Activated CD4-positive, alpha-beta T cell treated with anti-CD3 and anti-CD28 coated beads, Interleukin-2, amount 10 ng/mL, durations not matched to agents 24 days and 14 days (primary cell): ENCODE measurements at regions of chr18 and their contacts with region 1.

Region 1: DNA sequence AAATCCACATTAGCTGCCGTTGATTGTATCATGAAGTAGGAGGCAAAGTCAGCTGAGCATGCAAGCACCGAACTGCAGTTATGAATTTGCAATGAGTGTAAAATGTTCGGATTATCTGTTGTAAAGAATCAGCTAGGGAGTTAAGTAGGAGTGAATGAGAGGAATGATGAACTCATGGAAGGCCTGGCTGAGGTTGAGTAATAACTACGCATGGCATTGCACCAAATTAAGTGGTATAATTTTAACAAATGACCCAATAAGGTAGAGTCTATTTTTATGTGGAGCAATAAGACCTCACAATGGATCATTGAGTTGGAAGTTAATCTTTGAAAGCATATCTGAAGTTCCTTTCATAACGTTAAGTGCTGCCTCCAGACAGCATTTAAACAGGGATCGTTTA is 288.2 kb upstream of the CHST9 start:
- DNase-seq: no peak
- H3K4me3 Mint-ChIP-seq: no peak overlapping the region
- H3K27ac Mint-ChIP-seq: no peak overlapping the region
- H3K4me1 Mint-ChIP-seq: no peaks in the 10 kb centered on the region
- H3K27me3 Mint-ChIP-seq: no peaks in the 10 kb centered on the region

Region 2: DNA sequence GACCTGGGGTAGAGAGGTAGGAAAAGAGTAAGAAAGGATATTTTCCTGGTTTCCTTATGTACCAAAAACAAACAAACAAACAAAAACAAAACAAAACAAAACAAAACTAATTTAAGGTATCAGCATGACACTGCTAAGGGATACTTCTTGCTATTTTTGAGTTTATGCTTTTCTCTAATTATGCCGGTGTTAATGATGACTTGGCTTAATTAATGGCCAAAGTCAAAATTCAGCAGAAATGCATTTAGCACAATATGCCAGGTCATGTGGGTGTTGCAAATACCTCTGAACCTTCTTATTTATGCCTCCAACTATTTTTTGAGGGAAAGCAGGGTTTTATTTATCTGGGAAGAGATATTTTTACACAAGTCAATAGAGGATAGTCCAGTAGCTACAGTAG is 285.0 kb before region 1 on chr18:
- intact Hi-C with region 1: no loop called
- DNase-seq: no peak
- H3K4me3 Mint-ChIP-seq: no peak overlapping the region
- H3K27ac Mint-ChIP-seq: no peak overlapping the region
- H3K4me1 Mint-ChIP-seq: no peaks in the 10 kb centered on the region
- H3K27me3 Mint-ChIP-seq: peaks cover 17% of the 10 kb centered on the region

Region 3: DNA sequence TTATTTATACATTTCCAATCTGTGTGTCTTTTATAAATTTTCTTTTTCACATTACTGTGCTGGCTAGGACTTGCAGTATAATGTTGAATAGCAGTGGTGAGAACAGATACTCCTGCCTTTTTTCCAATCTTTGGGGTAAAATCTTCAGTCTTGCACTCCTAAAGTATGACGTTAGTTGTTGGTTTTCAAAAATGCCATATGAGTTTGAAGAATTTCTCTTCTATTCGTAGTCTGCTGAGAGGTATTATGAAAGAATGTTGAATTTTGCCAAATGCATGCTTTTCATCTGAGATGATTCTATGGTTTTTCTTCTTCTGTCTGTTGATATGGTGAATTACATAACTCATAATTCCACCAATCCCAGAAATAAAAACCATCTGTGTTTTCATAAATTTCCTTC is 47.1 kb after region 1 on chr18:
- intact Hi-C with region 1: loop called (anchors 10 kb)
- DNase-seq: no peak
- H3K4me3 Mint-ChIP-seq: no peak overlapping the region
- H3K27ac Mint-ChIP-seq: no peak overlapping the region
- H3K4me1 Mint-ChIP-seq: no peaks in the 10 kb centered on the region
- H3K27me3 Mint-ChIP-seq: no peaks in the 10 kb centered on the region